Ascending aorta (tissue), 2 donors: ENCODE measurements at regions of chr11 and their contacts with region 1.

Region 1: DNA sequence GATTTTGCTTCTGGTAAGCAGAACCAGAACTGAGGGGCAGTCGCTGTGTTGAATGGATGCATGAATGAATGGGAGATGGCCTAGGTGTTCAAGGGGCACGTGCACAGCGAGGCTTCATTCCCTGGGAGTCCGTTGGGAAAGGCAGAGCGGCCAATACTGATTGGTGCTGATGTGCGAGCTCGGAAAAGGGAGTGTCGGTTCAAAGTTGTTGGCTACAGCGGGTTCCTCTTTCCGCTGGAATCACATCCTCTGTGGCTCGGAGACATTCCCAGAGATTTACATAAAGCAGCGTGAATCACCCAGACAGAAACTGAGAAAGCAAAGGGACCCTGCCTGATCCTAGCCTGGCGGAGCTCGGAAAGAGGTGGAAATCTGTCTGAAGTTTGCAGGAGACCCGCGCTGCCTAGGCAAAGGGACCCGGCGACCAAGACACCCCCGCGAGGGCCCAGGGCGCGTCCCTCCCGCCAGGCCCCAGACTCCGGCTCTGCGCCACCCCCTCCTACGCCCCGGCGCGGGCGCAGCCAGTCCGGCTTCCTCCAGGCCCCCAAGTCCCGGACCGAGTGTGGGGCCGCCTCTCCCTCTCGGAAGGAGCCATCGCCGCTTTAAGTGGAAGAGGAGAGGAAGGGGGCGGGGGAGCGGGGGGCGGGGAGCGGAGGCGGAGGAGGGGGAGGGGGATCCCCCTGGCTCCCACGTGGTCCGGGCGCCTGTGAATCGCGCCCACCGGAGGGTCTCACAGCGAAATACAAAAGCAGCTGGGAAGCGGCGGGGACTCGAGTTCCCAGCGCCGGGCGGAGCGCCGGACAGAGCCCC is at the start of gene FJX1:
- DNase-seq: peak in 1 of 2 donors; percentile 77
- H3K4me3 ChIP-seq: peak within 1 kb of the TSS; percentile 68 to 74
- H3K27ac ChIP-seq: peak within 1 kb of the TSS; percentile 54 to 68
- H3K4me1 ChIP-seq: peaks cover 3 to 16% of the 10 kb centered on the region in 2 donors
- H3K27me3 ChIP-seq: peaks cover 7% of the 10 kb centered on the region
- CTCF ChIP-seq: no peak
- total RNA-seq, gene FJX1: 16.4 TPM

Region 2: GRCh38 chr11:35662649-35663407 is 44.9 kb after region 1 on chr11 and contains the start of gene TRIM44:
- intact Hi-C with region 1: loop called (anchors 2 kb)
- DNase-seq: peak; percentile 26 to 92
- H3K4me3 ChIP-seq: peak within 1 kb of the TSS; percentile 81 to 93
- H3K27ac ChIP-seq: peak within 1 kb of the TSS; percentile 94 to 97
- H3K4me1 ChIP-seq: peaks cover 0 to 9% of the 10 kb centered on the region in 2 donors
- H3K27me3 ChIP-seq: no peaks in the 10 kb centered on the region
- CTCF ChIP-seq: no peak
- total RNA-seq, gene TRIM44: 6.1 TPM

Region 3: DNA sequence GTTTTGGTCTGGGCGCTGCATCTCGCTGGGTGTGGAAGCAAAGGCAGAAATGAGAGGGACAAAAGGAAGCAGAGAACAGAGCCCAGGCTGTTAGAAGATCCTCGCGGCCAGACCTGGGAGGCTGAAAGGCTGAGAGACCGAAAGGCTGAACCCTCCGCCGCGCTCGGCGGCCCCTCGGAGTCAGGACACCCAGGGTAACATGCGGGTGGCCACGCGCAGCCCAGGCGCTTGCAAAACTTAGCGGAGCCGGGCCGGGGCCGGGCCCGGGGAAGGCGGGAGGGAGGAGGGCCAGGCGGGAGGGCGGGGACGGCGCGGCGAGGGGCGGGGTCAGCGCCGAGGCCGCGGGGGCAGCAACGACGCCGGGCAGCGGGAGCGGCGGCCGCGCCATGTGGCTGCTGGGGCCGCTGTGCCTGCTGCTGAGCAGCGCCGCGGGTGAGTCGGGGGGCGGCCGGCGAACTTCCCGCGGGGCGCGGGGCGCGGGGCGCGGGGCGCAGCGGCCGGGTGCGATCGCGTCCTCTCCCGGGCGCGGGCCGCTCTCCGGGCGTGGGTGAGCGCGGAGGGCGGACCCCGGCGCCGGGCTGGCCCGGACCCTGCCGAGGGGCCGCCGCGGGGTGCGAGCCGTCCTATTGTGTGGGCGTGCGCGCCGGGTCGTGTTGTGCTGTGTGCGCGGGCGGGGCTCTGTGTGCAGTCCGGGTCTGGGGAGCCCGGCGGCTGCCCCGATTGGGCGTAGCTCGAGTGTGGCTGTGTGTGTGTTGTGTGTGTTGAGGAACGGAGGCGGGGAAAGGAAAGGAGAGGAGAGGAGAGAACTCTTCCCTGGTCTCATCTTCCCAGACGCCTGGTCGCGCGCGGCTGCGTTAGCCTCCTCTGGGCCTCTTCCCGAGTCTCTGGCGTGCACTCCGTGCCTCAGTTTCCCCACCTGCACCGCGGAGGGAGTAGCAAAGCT is 326.1 kb after region 1 on chr11 and contains the start of gene LDLRAD3:
- intact Hi-C with region 1: loop called (anchors 10 kb)
- DNase-seq: peak in 1 of 2 donors; percentile 82
- H3K4me3 ChIP-seq: peak within 1 kb of the TSS; percentile 73 to 82
- H3K27ac ChIP-seq: peak within 1 kb of the TSS; percentile 38 to 43
- H3K4me1 ChIP-seq: peaks cover 0 to 3% of the 10 kb centered on the region in 2 donors
- H3K27me3 ChIP-seq: no peaks in the 10 kb centered on the region
- CTCF ChIP-seq: no peak
- total RNA-seq, gene LDLRAD3: 21.6 TPM

Region 4: DNA sequence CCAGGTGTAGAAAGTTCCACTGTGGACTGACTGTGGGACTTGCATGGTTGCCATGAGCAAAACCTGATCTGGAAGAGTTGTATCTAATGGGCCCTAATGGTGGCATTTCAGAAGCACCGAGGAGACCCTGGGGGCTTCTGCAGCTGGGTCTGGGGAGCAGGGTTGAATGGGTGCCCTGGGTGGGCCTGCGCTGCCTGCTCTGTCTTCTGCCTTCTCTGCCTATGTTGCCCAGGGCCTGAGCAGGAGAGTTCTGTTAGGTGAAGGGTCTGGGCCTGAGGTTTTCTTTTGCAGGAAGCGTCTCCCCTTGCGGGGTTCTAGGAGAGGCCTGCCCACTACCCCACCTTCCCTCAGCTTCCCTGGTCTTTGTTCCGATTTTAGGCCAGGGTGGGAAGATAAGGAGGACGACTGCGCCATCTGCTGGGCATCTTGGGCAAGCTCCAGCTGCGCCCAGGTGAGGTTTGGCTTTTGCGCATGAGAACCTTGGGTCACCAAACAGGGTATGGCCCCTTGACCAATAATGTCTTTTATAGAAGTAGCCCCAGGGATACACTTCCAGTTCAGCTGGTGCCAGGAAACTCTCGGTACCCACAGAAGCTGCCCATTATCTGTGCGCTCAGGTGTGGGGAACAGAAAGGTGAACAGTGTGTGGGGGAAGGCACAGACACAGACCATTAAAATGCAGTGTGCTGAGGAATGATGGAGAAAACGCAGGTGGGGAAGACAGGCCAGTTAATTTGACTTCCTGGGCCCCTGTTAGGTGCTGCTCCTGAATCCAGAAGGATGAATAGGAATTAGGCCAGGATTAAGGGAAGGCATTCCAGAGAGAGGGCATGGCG is 648.1 kb after region 1 on chr11:
- intact Hi-C with region 1: loop called (anchors 1 kb)
- DNase-seq: no peak
- H3K4me3 ChIP-seq: no peak overlapping the region
- H3K27ac ChIP-seq: no peak overlapping the region
- H3K4me1 ChIP-seq: no peaks in the 10 kb centered on the region
- H3K27me3 ChIP-seq: no peaks in the 10 kb centered on the region
- CTCF ChIP-seq: peak; percentile 55 to 77 (median 67)

Region 5: GRCh38 chr11:36492724-36493304 is 874.9 kb after region 1 on chr11:
- intact Hi-C with region 1: loop called (anchors 5 kb)
- DNase-seq: no peak
- H3K4me3 ChIP-seq: no peak overlapping the region
- H3K27ac ChIP-seq: no peak overlapping the region
- H3K4me1 ChIP-seq: peaks cover 0 to 3% of the 10 kb centered on the region in 2 donors
- H3K27me3 ChIP-seq: no peaks in the 10 kb centered on the region
- CTCF ChIP-seq: peak; percentile 43 to 81 (median 77)